Activated CD4-positive, alpha-beta T cell treated with anti-CD3 and anti-CD28 coated beads, Interleukin-2, amount 10 ng/mL, durations not matched to agents 7 days and 5 days (primary cell): ENCODE measurements at regions of chr1 and their contacts with region 1.

Region 1: DNA sequence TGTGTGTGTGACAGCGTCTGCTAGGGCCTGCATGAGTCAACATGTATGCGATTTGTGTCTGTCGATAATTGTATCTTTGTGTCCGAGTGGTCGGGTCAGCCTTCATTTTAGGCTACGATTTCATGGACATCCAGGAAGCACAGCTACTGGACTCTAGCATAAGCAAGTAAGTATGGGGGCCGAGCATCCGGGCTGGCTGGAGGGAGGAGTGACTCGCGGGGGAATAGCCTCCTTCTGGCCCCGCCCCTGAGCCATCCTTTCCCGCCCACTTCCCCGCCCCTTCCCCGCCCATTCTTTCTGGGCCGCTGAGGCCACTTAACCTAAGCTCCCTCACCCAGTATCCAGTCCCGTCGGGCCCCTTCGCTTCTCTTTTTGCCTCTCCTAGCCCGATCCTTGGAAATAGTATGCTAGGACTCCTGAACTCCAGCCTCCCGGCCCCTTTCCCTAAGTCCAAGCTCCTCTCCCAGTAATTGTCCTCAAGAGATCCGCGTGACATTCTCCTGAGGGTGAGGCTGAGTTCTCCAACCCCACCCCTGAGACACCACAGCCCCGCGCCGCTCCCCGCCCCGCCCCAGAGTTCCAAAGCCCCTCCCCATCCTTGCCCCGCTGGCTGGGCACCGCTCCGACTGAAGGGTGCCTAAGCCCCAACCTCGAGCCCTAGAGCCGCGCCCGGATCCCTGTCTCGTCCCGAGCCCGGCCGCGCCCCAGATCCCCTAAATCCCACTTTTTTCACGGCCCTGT is 1.2 kb downstream of the MAP3K6 start:
- DNase-seq: peak; percentile 81
- H3K4me3 Mint-ChIP-seq: peak overlapping the region; percentile 77
- H3K27ac Mint-ChIP-seq: peak overlapping the region; percentile 82
- H3K4me1 Mint-ChIP-seq: peaks cover 50% of the 10 kb centered on the region
- H3K27me3 Mint-ChIP-seq: no peaks in the 10 kb centered on the region

Region 2: GRCh38 chr1:27300341-27301051 is 65.0 kb before region 1 on chr1:
- CTCF ChIA-PET with region 1: interaction called, 17 read pairs
- POLR2A ChIA-PET with region 1: interaction called, 3 read pairs
- DNase-seq: peak; percentile 75
- H3K4me3 Mint-ChIP-seq: no peak overlapping the region
- H3K27ac Mint-ChIP-seq: no peak overlapping the region
- H3K4me1 Mint-ChIP-seq: peaks cover 5% of the 10 kb centered on the region
- H3K27me3 Mint-ChIP-seq: no peaks in the 10 kb centered on the region

Region 3: DNA sequence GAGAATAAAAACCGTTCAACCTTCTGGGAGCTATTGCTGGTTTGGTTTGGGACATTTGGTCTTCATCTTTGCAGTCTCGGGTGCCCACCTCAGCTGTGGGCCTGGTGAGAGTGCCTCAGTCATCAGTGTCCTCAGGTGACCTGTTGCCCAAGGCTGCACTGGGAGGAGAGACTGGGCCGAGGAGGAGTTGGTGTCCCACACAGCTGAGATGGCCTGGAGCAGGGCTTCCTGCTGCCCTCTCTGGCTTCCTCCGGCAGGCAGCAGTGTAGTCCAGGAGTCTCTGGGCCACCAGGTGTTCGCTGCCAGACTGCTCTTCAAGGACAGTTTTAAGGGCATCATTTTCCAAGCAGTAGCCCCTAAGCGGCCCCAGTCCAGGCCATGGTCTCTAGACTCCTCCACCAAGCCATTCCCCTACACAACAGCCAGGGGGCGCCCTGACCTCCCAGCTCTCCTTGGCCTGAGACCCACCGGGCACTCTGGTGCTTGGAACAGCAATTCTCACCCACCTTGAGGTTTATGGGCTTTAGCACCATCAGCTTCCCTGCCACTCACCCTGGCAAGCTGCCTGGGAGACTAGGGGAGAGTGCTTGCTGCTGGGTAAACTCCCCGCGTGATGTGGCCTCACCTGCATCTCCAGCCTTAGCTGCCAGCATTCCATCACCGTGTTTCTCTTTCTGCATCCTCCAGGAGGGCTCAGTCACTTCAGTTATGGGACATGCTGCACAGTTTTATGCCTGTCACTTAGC is 32.8 kb before region 1 on chr1:
- CTCF ChIA-PET with region 1: interaction called, 29 read pairs
- POLR2A ChIA-PET with region 1: interaction called, 3 read pairs
- DNase-seq: peak; percentile 60
- H3K4me3 Mint-ChIP-seq: no peak overlapping the region
- H3K27ac Mint-ChIP-seq: peak overlapping the region; percentile 60
- H3K4me1 Mint-ChIP-seq: peaks cover 26% of the 10 kb centered on the region
- H3K27me3 Mint-ChIP-seq: no peaks in the 10 kb centered on the region

Region 4: DNA sequence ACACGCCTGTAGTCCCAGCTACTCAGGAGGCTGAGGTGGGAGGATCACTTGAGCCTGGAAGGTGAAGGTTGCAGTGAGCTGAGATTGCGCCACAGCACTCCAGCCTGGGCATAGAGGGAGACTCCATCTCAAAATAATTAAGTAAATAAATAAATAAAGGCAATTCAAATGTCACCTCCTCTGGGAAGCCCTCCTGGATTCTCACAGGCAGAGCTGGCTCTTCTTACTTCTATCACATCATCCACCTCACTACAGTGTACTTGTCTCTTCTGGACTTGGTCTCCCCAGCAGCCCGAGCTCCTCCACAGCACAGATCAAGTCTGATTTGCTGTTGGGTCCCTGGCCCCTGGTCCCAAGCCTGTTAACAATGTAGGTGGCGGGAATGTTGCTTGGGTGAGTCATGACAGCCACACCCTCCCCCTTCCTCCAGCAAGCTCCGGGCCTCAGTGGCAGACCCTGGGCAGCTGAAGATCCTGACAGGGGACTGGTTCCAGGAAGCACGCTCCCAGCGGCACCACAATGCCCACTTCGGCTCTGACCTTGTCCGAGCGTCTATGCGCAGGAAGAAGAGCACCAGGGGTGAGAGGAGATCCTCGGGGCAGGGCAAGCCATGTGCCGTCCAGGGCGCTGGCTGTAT is 18.4 kb before region 1 on chr1:
- CTCF ChIA-PET with region 1: interaction called, 17 read pairs
- POLR2A ChIA-PET with region 1: no interaction called
- DNase-seq: no peak
- H3K4me3 Mint-ChIP-seq: no peak overlapping the region
- H3K27ac Mint-ChIP-seq: peak overlapping the region; percentile 41
- H3K4me1 Mint-ChIP-seq: peaks cover 31% of the 10 kb centered on the region
- H3K27me3 Mint-ChIP-seq: no peaks in the 10 kb centered on the region